CD4-positive, alpha-beta memory T cell (primary cell): ENCODE measurements at regions of chr6 and their contacts with region 1.

Region 1: GRCh38 chr6:43369174-43370022 is at the start of gene ZNF318:
- DNase-seq: peak; percentile 93 to 95 (median 95)
- H3K4me3 ChIP-seq: peak within 1 kb of the TSS; percentile 63 to 69
- H3K4me3 Mint-ChIP-seq: peak within 1 kb of the TSS; percentile 91 to 95 (median 94)
- H3K27ac ChIP-seq: peak within 1 kb of the TSS; percentile 86
- H3K27ac Mint-ChIP-seq: peak within 1 kb of the TSS; percentile 94 to 97 (median 97)
- H3K4me1 ChIP-seq: peaks cover 39% of the 10 kb centered on the region
- H3K4me1 Mint-ChIP-seq: peaks cover 32 to 53% (median 39%) of the 10 kb centered on the region in 4 donors
- H3K27me3 ChIP-seq: no peaks in the 10 kb centered on the region
- H3K27me3 Mint-ChIP-seq: no peaks in the 10 kb centered on the region
- total RNA-seq, gene ZNF318: 30.6 to 32.2 TPM

Region 2: DNA sequence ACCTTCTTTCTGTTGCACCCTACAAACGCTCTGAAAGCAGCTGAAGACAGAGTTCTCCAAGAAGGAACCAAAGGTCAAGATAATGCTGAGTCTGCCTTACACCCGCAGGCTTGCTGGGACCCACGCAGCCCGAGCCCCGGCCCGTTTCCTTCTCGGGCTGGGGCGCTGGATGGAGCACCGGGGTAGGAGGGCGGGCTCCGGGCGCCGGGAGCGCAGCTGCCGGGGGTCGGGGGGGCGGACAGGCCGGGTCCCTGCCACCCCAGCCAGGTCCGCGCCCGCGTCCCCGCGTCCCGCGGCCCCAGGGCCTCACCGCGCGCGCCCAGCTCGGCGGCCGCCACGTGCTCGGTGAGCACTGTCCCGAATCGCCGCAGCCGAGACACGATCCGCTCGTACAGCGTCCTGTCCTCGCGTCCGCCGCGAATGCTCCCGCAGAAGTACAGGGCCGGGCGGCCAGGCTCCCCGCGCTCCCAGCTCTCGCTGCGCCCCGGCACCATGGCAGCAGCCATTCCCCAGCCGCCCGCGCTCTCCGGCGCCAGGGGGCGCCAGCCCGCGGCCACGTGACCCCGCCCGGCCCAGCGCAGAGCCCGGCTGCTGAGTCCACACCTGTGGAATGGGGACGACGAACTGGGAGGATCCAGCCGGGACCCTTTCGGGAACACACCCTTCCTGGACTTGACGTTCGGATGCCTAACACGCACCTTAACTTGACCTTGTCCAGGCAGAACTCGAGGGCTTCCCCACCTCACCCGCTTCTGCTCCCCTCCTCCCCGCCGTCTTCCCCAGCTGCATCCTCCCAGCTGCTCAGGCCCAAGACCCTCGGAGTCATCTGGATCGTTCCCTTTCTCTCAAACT is 140.2 kb before region 1 on chr6 and contains the start of gene DNPH1:
- CTCF ChIA-PET with region 1: interaction called, 3 read pairs
- POLR2A ChIA-PET with region 1: interaction called, 12 read pairs
- intact Hi-C with region 1: loop called (anchors 5 kb)
- DNase-seq: peak; percentile 71 to 84 (median 79)
- H3K4me3 ChIP-seq: peak within 1 kb of the TSS; percentile 11 to 69
- H3K4me3 Mint-ChIP-seq: peak within 1 kb of the TSS; percentile 88 to 96 (median 92)
- H3K27ac ChIP-seq: peak within 1 kb of the TSS; percentile 63
- H3K27ac Mint-ChIP-seq: peak within 1 kb of the TSS; percentile 94 to 97 (median 95)
- H3K4me1 ChIP-seq: peaks cover 49% of the 10 kb centered on the region
- H3K4me1 Mint-ChIP-seq: peaks cover 26 to 48% (median 34%) of the 10 kb centered on the region in 4 donors
- H3K27me3 ChIP-seq: no peaks in the 10 kb centered on the region
- H3K27me3 Mint-ChIP-seq: peaks cover 3 to 4% of the 10 kb centered on the region in 2 donors
- total RNA-seq, gene DNPH1: 32.8 to 34.8 TPM

Region 3: DNA sequence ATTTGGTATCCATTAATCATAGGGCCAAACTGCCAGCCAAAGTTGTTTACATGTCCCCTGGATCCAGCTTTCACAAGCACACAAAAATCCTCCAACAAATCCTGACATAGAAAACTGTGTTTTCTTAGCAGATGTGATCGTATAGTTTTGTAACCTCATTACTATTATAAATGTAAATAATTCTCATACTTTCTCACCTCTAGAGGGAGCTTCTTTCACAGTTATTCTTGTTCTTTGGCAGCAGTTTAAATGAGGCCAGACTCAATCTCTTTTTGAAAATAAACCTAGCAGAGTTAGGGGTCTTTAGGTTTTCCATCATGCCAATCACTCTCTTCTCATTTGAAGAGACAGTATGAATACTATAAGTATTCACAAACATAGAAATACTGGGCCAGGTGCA is 17.1 kb after region 1 on chr6:
- CTCF ChIA-PET with region 1: interaction called, 21 read pairs
- POLR2A ChIA-PET with region 1: interaction called, 197 read pairs
- intact Hi-C with region 1: loop called (anchors 1 kb)
- DNase-seq: peak in 3 of 5 donors; percentile 29 to 60 (median 36)
- H3K4me3 ChIP-seq: no peak overlapping the region
- H3K4me3 Mint-ChIP-seq: peak overlapping the region in 2 of 8 donors; percentile 28 to 64
- H3K27ac ChIP-seq: no peak overlapping the region
- H3K27ac Mint-ChIP-seq: peak overlapping the region in 6 of 7 donors; percentile 43 to 92 (median 84)
- H3K4me1 ChIP-seq: peaks cover 67% of the 10 kb centered on the region
- H3K4me1 Mint-ChIP-seq: peaks cover 54 to 74% (median 63%) of the 10 kb centered on the region in 4 donors
- H3K27me3 ChIP-seq: no peaks in the 10 kb centered on the region
- H3K27me3 Mint-ChIP-seq: peaks cover 0 to 8% of the 10 kb centered on the region in 2 donors

Region 4: DNA sequence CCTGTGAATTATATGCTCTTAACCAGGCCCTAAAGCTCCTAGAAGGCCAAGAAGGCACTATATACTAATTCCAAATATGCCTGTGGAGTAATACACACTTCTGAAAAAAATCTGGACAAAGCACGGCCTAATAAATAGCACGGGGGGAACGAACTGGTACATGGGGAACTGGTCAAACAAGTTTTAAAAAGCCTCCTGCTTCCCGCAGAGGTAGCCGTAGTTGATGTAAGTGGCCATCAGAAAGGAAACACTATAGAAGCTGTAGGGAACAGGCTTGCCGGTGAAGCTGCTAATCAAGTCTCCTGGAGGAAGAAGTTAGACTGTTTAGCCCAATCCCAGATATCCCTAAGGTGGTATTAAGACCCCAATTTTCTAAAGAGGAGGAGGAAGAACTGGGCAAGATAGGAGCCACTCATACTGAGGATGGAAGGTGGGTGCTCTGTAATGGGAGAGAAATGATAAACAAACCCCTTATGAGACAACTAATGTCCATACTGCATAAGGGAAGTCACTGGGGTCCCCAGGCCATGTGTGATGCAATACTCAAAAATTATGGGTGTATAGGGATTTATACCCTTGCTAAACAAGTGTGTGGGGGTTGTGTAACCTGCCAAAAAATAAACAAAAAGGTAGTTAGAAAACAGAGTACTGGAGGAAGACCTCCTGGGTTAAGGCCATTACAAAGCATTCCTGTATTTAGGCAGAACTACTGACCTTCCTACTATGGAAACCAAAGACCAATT is 27.2 kb after region 1 on chr6:
- CTCF ChIA-PET with region 1: interaction called, 10 read pairs
- POLR2A ChIA-PET with region 1: interaction called, 19 read pairs
- intact Hi-C with region 1: loop called (anchors 1 kb)
- DNase-seq: no peak
- H3K4me3 ChIP-seq: no peak overlapping the region
- H3K4me3 Mint-ChIP-seq: peak overlapping the region in 1 of 8 donors; percentile 1
- H3K27ac ChIP-seq: no peak overlapping the region
- H3K27ac Mint-ChIP-seq: peak overlapping the region in 3 of 7 donors; percentile 31 to 78 (median 62)
- H3K4me1 ChIP-seq: peaks cover 14% of the 10 kb centered on the region
- H3K4me1 Mint-ChIP-seq: peaks cover 10 to 32% (median 16%) of the 10 kb centered on the region in 4 donors
- H3K27me3 ChIP-seq: no peaks in the 10 kb centered on the region
- H3K27me3 Mint-ChIP-seq: no peaks in the 10 kb centered on the region

Region 5: DNA sequence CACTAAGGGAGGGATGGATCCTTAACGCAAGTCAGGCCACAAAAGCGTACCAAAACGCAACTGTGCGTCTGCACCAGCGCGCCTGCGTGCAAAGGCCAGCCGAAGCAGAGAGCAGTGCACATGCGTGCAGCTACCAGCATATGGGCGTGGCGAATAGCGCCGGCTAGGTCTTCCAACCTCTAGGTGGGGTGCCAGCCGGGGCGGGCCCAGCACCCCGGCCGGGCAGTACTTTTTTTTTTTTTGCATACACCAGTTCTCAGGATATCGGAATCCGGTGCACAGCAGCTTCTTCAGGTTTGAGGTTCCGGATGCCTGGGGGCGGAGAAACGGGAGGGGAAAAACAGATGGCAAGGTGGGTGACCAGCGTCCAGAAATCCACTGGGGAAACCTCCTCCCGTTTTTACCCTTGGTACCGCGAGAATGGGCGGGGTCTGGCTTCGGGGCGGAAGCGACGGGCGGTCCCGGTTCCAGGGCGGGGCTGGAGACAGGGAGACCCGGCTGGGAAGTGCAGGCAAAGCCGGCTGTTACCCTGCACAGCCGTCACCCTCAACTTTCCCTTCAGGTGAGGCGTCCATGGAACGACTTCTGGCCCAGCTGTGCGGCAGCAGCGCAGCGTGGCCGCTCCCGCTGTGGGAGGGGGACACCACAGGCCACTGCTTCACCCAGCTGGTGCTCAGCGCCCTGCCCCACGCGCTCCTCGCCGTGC is 58.2 kb after region 1 on chr6 and contains the start of gene ABCC10:
- CTCF ChIA-PET with region 1: no interaction called
- POLR2A ChIA-PET with region 1: interaction called, 32 read pairs
- intact Hi-C with region 1: loop called (anchors 1 kb)
- DNase-seq: peak; percentile 93 to 97 (median 95)
- H3K4me3 ChIP-seq: peak within 1 kb of the TSS; percentile 70 to 95
- H3K4me3 Mint-ChIP-seq: peak within 1 kb of the TSS; percentile 92 to 98 (median 96)
- H3K27ac ChIP-seq: peak within 1 kb of the TSS; percentile 79
- H3K27ac Mint-ChIP-seq: peak within 1 kb of the TSS; percentile 88 to 99 (median 98)
- H3K4me1 ChIP-seq: peaks cover 30% of the 10 kb centered on the region
- H3K4me1 Mint-ChIP-seq: peaks cover 20 to 28% (median 24%) of the 10 kb centered on the region in 4 donors
- H3K27me3 ChIP-seq: no peaks in the 10 kb centered on the region
- H3K27me3 Mint-ChIP-seq: no peaks in the 10 kb centered on the region
- total RNA-seq, gene ABCC10: 69.9 to 80.0 TPM

Region 6: GRCh38 chr6:43477235-43478007 is 108.0 kb after region 1 on chr6 and contains the start of gene TJAP1:
- CTCF ChIA-PET with region 1: no interaction called
- POLR2A ChIA-PET with region 1: interaction called, 3 read pairs
- intact Hi-C with region 1: loop called (anchors 1 kb)
- DNase-seq: peak; percentile 93 to 96 (median 94)
- H3K4me3 ChIP-seq: peak within 1 kb of the TSS; percentile 45 to 69
- H3K4me3 Mint-ChIP-seq: peak within 1 kb of the TSS; percentile 85 to 97 (median 92)
- H3K27ac ChIP-seq: peak within 1 kb of the TSS; percentile 97
- H3K27ac Mint-ChIP-seq: peak within 1 kb of the TSS; percentile 89 to 99 (median 97)
- H3K4me1 ChIP-seq: peaks cover 28% of the 10 kb centered on the region
- H3K4me1 Mint-ChIP-seq: peaks cover 38 to 46% (median 42%) of the 10 kb centered on the region in 4 donors
- H3K27me3 ChIP-seq: no peaks in the 10 kb centered on the region
- H3K27me3 Mint-ChIP-seq: no peaks in the 10 kb centered on the region
- total RNA-seq, gene TJAP1: 52.0 to 54.4 TPM

Region 7: DNA sequence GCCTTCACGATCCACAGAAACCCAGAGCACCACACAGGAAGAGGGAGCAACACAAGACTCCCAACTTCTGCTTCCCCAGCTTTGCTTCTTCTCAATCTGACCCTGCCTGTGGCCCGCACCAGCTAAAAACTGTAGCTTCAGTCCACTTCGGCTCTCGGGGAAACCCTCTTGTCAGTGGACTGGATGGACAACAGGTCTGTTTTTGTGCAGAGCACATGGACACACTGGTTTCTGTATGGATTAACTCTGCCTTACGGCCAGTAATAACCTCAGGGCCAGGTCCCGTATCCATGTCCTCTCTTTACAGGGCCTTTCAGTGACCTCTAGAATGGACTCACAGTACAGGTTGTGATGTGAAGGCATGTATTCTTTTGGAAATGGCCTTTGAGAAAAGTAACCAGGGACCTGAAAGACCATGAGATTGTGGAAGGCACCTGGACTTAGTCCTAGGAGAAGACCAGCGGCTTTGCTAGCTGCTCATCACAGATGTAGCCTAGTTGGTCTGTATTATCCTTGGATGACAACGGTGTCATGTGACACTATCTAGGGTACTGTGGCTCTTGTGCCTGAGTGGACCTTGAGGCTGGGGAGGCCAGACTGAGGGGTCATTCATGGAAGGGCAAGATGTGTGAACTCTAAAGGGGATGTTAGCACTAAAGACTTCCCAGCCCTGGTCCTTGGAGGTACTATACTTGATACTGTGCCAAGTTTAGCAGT is 153.3 kb after region 1 on chr6:
- CTCF ChIA-PET with region 1: no interaction called
- POLR2A ChIA-PET with region 1: no interaction called
- intact Hi-C with region 1: no loop called
- DNase-seq: no peak
- H3K4me3 ChIP-seq: no peak overlapping the region
- H3K4me3 Mint-ChIP-seq: no peak overlapping the region
- H3K27ac ChIP-seq: no peak overlapping the region
- H3K27ac Mint-ChIP-seq: peak overlapping the region in 3 of 7 donors; percentile 12 to 79 (median 61)
- H3K4me1 ChIP-seq: peaks cover 17% of the 10 kb centered on the region
- H3K4me1 Mint-ChIP-seq: peaks cover 0 to 2% (median under 1%) of the 10 kb centered on the region in 4 donors
- H3K27me3 ChIP-seq: no peaks in the 10 kb centered on the region
- H3K27me3 Mint-ChIP-seq: no peaks in the 10 kb centered on the region

Region 8: GRCh38 chr6:43575772-43576551 is 206.6 kb after region 1 on chr6 and contains the starts of genes POLH and XPO5:
- CTCF ChIA-PET with region 1: no interaction called
- POLR2A ChIA-PET with region 1: no interaction called
- intact Hi-C with region 1: loop called (anchors 2 kb)
- DNase-seq: peak; percentile 88 to 90 (median 90)
- H3K4me3 ChIP-seq: peak within 1 kb of the TSS; percentile 71 to 82
- H3K4me3 Mint-ChIP-seq: peak within 1 kb of the TSS; percentile 93 to 99 (median 98)
- H3K27ac ChIP-seq: peak within 1 kb of the TSS; percentile 79
- H3K27ac Mint-ChIP-seq: peak within 1 kb of the TSS; percentile 85 to 96 (median 95)
- H3K4me1 ChIP-seq: peaks cover 33% of the 10 kb centered on the region
- H3K4me1 Mint-ChIP-seq: peaks cover 23 to 48% (median 36%) of the 10 kb centered on the region in 4 donors
- H3K27me3 ChIP-seq: no peaks in the 10 kb centered on the region
- H3K27me3 Mint-ChIP-seq: no peaks in the 10 kb centered on the region
- total RNA-seq, gene POLH: 27.1 to 31.9 TPM
- total RNA-seq, gene XPO5: 42.2 to 43.4 TPM

Region 9: DNA sequence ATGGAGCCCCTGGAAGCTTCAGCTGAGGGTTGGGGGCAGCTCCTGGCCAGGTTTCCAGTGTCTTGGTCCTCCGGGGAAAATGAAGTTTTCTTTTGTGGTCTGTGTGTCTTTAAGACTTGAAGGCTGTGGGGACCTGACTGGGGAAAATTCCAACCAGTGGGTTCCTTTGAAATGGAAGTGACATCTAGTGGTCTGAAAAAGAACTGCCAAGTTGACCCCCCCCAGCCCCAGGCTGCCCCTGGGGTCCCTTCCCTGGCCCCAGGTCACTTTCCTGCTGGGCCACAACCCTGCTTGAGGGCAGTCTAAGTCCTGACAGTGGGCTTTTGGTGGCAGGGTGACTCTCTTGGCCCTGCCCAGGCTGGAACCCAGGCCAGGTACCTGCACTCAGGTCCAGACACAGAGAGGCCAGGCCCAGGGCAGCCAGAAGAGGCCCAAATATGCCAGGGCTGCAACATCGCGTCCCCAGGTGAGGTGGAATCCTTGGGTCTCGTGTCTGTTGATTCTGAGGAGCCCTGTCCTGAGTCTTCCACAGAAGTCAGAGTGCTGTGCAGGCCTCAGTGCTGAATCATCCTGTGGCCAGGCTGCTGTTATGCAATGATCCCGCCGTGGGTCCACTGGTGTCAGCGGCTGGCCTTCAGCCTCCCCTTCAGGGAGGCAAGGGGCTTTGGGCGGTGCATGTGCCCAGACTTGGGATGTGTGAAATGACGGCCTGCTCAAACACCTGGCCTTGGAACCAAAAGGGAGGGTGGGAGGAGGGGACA is 469.1 kb after region 1 on chr6:
- CTCF ChIA-PET with region 1: no interaction called
- POLR2A ChIA-PET with region 1: no interaction called
- intact Hi-C with region 1: no loop called
- DNase-seq: no peak
- H3K4me3 ChIP-seq: no peak overlapping the region
- H3K4me3 Mint-ChIP-seq: no peak overlapping the region
- H3K27ac ChIP-seq: no peak overlapping the region
- H3K27ac Mint-ChIP-seq: no peak overlapping the region
- H3K4me1 ChIP-seq: no peaks in the 10 kb centered on the region
- H3K4me1 Mint-ChIP-seq: no peaks in the 10 kb centered on the region
- H3K27me3 ChIP-seq: no peaks in the 10 kb centered on the region
- H3K27me3 Mint-ChIP-seq: no peaks in the 10 kb centered on the region